OCI-LY7 (cell line): ENCODE measurements at regions of chr7 and their contacts with region 1.

Region 1: GRCh38 chr7:50664461-50664922 is 99.3 kb upstream of the DDC start:
- DNase-seq: no peak
- H3K4me3 ChIP-seq: no peak overlapping the region
- H3K27ac ChIP-seq: no peak overlapping the region
- H3K4me1 ChIP-seq: peaks cover 7% of the 10 kb centered on the region
- CTCF ChIP-seq: no peak

Region 2: GRCh38 chr7:50608196-50608906 is 56.1 kb before region 1 on chr7:
- CTCF ChIA-PET with region 1: no interaction called
- POLR2A ChIA-PET with region 1: no interaction called
- intact Hi-C with region 1: loop called (anchors 10 kb)
- DNase-seq: peak; percentile 10
- H3K4me3 ChIP-seq: no peak overlapping the region
- H3K27ac ChIP-seq: no peak overlapping the region
- H3K4me1 ChIP-seq: no peaks in the 10 kb centered on the region
- CTCF ChIP-seq: no peak

Region 3: DNA sequence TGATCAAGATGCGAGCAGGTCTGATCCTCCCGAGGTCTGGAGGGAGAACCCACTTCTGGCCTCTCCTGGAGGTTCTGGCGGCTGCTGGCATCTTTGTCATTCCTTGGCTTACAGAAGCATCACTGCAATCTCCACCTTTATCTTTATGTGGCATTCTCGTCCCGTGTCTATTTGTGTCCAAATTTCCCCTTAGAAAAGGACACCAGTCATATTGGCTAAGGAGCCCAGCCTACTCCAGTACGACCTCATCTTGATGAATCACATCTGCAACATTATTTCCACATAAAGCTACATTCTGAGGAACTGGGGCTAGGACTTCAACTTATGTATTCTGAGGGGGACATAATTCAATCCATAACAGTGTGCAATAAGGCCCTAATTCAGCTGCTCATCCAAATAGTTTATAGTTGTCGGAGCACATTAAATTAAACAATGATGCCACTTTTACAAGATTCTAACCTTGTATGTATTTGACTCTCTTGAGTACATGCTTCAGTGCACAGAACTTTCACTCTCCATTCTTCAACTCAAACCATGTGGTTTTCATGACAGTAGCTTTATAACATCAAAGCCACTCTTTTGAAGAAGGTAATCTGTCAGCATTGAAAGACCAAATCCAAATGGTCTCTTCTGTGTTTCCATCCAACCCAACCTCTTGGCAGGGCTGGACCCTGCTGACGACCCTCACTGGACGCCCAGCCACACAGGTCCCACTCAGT is 13.1 kb before region 1 on chr7:
- CTCF ChIA-PET with region 1: no interaction called
- POLR2A ChIA-PET with region 1: no interaction called
- intact Hi-C with region 1: no loop called
- DNase-seq: no peak
- H3K4me3 ChIP-seq: no peak overlapping the region
- H3K27ac ChIP-seq: no peak overlapping the region
- H3K4me1 ChIP-seq: peaks cover under 1% of the 10 kb centered on the region
- CTCF ChIP-seq: no peak